ENCODE measurements at regions of chr4 and their contacts with region 1.

Region 1: GRCh38 chr4:166252487-166253402 is 379.7 kb downstream of the TLL1 start:
- DNase-seq: no peak

Region 2: GRCh38 chr4:165493359-165493758 is 759.4 kb before region 1 on chr4:
- intact Hi-C with region 1: loop called (anchors 5 kb)
- DNase-seq: peak; percentile 86

Region 3: DNA sequence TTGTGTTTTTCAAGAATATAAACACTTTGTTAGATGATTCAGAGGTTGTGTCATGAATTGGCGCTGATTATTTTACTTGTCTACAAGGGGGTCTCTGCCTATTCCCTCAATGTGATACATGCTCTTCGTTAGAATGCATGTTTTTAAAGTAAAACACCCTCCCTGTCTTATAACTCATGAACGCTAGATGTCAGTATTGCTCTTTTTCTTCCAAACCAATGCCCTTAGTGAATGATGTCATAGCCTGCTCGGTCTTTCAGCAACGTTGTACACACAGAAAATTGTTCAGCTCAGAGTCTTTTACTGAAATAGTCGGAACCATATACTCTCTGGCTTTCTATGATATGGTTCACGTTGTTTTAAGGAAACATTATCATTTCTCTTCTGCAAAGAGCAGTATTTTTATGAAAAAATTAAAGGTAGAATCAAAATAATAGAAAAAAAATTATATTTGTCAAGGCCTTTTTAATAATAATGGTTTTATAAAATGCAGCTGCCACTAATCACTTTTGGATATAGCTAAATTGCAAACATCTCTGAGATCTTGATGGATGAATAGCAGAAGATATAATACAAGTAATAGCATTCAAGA is 86.8 kb before region 1 on chr4:
- intact Hi-C with region 1: loop called (anchors 5 kb)
- DNase-seq: no peak

Region 4: DNA sequence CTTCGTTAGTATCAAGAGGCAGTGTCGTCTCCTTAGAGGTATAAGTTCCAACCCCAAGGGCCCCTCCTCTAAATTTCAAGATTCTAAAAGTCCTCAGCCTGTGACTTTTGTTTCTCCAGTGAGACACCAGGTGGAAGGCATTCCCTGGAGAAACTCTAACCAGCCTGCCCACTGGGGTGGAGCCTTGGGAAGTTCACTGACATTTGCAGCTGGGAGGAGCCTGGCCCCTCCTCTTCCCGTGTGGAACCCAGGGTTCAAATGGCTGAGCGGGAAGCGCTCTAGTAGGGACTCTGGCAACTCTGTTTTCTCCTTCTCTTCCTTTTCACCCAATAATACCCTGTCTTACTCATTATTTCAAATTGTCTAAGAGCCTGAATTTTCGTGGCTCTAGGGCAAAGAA is 54.7 kb before region 1 on chr4:
- intact Hi-C with region 1: no loop called
- DNase-seq: no peak